Body of pancreas (tissue), 4 donors: ENCODE measurements at regions of chr10 and their contacts with region 1.

Region 1: GRCh38 chr10:80205478-80206276 is at the start of gene ANXA11:
- DNase-seq: peak; percentile 91 to 94 (median 92)
- ATAC-seq: peak; percentile 83
- H3K4me3 ChIP-seq: peak within 1 kb of the TSS; percentile 21 to 75
- H3K27ac ChIP-seq: peak within 1 kb of the TSS; percentile 98 to 100 (median 100)
- H3K4me1 ChIP-seq: peaks cover 62% of the 10 kb centered on the region
- H3K27me3 ChIP-seq: no peaks in the 10 kb centered on the region
- CTCF ChIP-seq: peak in 2 of 7 experiments; percentile 18 to 19
- POLR2A ChIP-seq: peak; percentile 97 to 98 (median 98)
- total RNA-seq, gene ANXA11: 68.2 to 71.9 TPM

Region 2: DNA sequence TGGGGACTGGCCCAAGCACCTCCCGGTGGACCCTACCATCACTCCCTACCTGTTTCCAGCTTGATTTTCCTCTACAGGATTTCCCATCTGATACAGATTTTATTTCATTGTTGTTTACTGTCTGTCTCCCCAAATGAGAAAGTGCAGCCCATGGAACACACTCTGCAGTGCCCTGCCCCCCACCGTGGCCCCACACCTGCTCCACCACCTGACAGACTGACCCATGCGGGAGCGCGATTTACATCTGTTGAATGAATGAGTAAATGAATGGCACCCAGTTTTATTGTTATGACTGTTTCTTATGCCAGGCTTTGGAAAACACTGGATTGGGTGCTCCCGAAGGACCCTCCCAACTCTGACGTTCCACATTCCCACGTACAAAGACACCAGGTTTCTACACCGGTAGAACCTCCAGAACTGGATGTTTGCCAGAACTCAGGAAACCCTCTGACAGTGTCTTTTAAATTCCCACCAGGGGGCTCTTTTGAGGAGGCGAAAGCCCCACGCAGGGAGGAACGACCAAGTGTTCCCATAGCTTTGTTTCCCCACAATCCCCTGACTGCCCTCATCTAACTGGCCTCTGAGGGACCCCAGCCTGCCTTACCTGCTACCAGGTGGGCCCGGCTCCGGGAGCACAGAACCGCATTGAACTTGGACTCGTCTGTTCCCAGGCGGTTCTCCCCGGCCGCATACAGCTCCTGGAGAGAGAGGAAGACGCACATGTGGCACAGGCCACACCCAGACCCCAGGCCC is 44.2 kb before region 1 on chr10:
- intact Hi-C with region 1: loop called (anchors 5 kb)
- DNase-seq: no peak
- ATAC-seq: no peak
- H3K4me3 ChIP-seq: no peak overlapping the region
- H3K27ac ChIP-seq: no peak overlapping the region
- H3K4me1 ChIP-seq: no peaks in the 10 kb centered on the region
- H3K27me3 ChIP-seq: no peaks in the 10 kb centered on the region
- CTCF ChIP-seq: peak in 4 of 7 experiments; percentile 7 to 32 (median 20)
- POLR2A ChIP-seq: no peak